Ovary (tissue), 10 donors: ENCODE measurements at regions of chr10 and their contacts with region 1.

Region 1: DNA sequence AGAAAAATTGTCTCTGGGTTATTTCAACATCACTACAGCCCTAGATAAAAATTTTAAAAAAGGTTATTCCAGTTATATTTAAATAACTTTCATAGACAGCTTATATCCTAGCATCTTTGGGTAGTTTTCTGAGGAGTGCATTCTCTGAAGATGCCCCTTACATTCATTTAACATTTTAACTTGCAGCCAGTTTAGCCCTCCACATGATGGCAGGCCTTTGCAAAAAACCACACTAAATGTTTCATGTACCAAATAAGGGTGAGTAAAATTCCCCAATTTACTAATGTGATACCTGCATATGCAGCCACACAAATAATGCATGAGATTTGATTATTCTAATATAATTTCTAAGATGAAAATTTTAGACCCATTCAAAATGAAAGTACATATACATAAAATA is 108.4 kb upstream of the ZWINT start:
- DNase-seq: no peak
- H3K4me3 ChIP-seq: no peak overlapping the region
- H3K27ac ChIP-seq: no peak overlapping the region
- H3K4me1 ChIP-seq: no peaks in the 10 kb centered on the region
- H3K27me3 ChIP-seq: no peaks in the 10 kb centered on the region
- CTCF ChIP-seq: no peak
- EP300 ChIP-seq: no peak
- POLR2A ChIP-seq: no peak

Region 2: GRCh38 chr10:56537984-56538383 is 68.5 kb after region 1 on chr10:
- intact Hi-C with region 1: no loop called
- DNase-seq: no peak
- H3K4me3 ChIP-seq: no peak overlapping the region
- H3K27ac ChIP-seq: no peak overlapping the region
- H3K4me1 ChIP-seq: no peaks in the 10 kb centered on the region
- H3K27me3 ChIP-seq: no peaks in the 10 kb centered on the region
- CTCF ChIP-seq: no peak
- EP300 ChIP-seq: no peak
- POLR2A ChIP-seq: no peak

Region 3: GRCh38 chr10:56763090-56763489 is 293.6 kb after region 1 on chr10:
- intact Hi-C with region 1: loop called in 1 of 4 experiments (anchors 5 kb)
- DNase-seq: no peak
- H3K4me3 ChIP-seq: no peak overlapping the region
- H3K27ac ChIP-seq: no peak overlapping the region
- H3K4me1 ChIP-seq: no peaks in the 10 kb centered on the region
- H3K27me3 ChIP-seq: no peaks in the 10 kb centered on the region
- CTCF ChIP-seq: no peak
- EP300 ChIP-seq: no peak
- POLR2A ChIP-seq: no peak